ENCODE measurements at regions of chr1 and their contacts with region 1.

Region 1: DNA sequence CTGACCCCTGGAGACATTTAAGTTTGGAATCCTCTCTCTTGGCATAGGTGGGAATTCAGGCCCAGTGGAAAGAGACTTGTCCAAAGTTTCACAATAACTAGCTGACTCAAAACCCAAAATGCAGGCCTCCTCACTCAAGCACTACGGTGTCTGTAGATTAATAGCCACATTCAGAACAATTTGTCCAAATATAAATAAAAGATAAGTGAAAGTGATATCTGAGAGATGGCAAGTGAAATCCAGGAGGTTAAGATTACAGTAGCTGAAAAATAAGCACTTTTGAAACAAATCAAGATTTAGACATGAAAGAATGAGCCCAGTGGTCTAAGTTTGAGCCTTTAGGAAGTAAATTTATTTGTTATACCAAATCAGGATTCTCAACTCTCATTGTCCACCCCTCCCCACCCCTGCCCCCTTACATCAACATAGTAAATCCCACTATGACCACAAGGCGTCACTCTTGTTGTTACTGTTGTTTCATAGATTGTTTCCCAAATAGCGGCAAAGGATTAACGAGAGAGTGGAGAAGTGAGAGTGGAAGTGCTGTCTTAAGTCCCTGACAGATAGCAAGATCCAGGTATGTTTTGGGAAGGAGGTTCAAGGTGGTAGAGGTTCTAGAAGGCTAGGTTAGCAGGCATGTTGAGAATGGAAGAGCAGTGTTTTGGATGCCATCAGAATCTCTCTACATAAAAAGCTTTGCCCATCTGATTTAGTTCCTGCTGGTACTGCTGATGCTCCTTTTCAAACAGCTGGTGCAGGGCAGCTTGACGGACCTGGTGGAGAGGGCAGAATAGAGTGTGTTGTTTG is 7.1 kb upstream of the TPM3 start:
- DNase-seq: peak; percentile 36
- H3K4me3 Mint-ChIP-seq: no peak overlapping the region
- H3K27ac Mint-ChIP-seq: no peak overlapping the region
- H3K4me1 Mint-ChIP-seq: no peaks in the 10 kb centered on the region
- H3K27me3 Mint-ChIP-seq: peaks cover 14% of the 10 kb centered on the region

Region 2: GRCh38 chr1:154148807-154149206 is 50.2 kb before region 1 on chr1:
- CTCF ChIA-PET with region 1: no interaction called
- POLR2A ChIA-PET with region 1: no interaction called
- DNase-seq: no peak
- H3K4me3 Mint-ChIP-seq: no peak overlapping the region
- H3K27ac Mint-ChIP-seq: no peak overlapping the region
- H3K4me1 Mint-ChIP-seq: peaks cover 10% of the 10 kb centered on the region
- H3K27me3 Mint-ChIP-seq: no peaks in the 10 kb centered on the region

Region 3: GRCh38 chr1:154170547-154171222 is 28.3 kb before region 1 on chr1:
- CTCF ChIA-PET with region 1: no interaction called
- POLR2A ChIA-PET with region 1: no interaction called
- DNase-seq: peak; percentile 38
- H3K4me3 Mint-ChIP-seq: no peak overlapping the region
- H3K27ac Mint-ChIP-seq: peak overlapping the region; percentile 28
- H3K4me1 Mint-ChIP-seq: peaks cover 45% of the 10 kb centered on the region
- H3K27me3 Mint-ChIP-seq: no peaks in the 10 kb centered on the region

Region 4: GRCh38 chr1:154240294-154240831 is 41.4 kb after region 1 on chr1:
- CTCF ChIA-PET with region 1: no interaction called
- POLR2A ChIA-PET with region 1: no interaction called
- DNase-seq: no peak
- H3K4me3 Mint-ChIP-seq: no peak overlapping the region
- H3K27ac Mint-ChIP-seq: no peak overlapping the region
- H3K4me1 Mint-ChIP-seq: peaks cover 32% of the 10 kb centered on the region
- H3K27me3 Mint-ChIP-seq: no peaks in the 10 kb centered on the region

Region 5: DNA sequence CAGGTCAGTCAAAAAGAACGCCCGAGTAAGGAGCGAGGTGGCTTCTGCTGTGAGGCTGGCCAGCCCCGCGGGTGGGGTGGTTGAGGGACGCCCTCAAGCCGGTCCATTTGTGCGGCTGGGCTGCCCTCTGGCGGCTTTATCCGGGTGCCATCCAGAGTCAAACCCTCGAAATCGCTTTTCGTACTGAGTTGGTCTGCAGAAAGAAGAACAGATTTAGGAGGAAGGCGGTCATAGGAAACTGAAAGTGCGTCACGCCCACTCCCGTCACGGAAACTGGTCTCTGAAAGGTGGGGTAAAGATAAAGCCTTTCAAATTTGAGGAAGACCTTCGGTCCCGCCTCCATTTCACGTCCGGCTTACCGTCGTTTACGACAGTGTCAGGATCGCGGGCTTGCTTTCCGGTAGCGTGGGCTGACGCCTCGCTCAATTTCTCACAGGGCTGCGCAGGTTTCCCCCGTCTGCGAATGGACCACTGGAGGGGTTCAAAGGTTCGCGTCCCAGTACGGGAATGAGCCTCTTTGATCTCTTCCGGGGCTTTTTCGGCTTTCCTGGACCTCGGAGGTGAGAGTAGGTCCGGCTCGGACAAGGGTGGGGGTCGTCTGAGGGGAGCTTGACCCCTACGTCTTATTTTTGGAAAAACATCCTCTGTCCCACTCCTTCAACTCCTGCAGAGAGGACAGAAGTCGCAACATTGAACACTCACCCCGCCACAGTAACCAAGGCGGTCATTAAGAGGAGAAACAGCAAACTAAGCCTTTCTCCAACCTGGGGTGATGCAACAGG is 73.4 kb after region 1 on chr1 and contains the start of gene HAX1:
- CTCF ChIA-PET with region 1: interaction called, 15 read pairs
- POLR2A ChIA-PET with region 1: interaction called, 4 read pairs
- DNase-seq: peak; percentile 98
- H3K4me3 Mint-ChIP-seq: peak within 1 kb of the TSS; percentile 91
- H3K27ac Mint-ChIP-seq: peak within 1 kb of the TSS; percentile 94
- H3K4me1 Mint-ChIP-seq: peaks cover 43% of the 10 kb centered on the region
- H3K27me3 Mint-ChIP-seq: no peaks in the 10 kb centered on the region
- total RNA-seq, gene HAX1: 141 to 142 TPM

Region 6: DNA sequence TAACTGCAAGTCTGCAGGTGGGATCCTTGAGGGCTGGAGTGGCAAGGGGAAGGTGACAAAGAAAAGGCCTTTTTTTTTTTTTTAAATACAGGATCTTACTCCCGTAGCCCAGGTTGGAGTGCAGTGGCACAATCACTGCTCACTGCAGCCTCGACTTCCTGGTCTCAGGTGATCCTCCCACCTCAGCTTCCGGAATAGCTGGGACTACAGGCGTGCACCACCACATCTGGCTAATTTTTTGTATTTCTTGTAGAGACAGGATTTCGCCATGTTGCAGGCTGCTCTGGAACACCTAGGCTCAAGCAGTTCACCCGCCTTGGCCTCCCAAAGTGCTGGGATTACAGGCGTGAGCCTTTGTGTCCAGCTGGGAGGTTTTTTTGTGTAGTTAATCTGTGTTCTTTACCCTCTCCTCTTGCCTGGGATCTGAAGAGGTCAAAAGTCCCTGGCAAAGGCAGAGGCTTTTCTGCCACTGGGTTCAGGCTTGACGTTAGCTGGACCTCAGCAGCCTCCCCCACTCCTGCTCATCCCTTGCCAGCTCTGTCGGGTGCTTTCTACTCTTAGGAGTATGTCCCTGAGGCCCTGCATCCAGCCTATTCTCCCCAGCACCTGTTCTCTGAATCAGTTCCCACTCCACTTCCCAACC is 211.3 kb after region 1 on chr1:
- CTCF ChIA-PET with region 1: no interaction called
- POLR2A ChIA-PET with region 1: no interaction called
- DNase-seq: peak; percentile 28
- H3K4me3 Mint-ChIP-seq: peak overlapping the region; percentile 3
- H3K27ac Mint-ChIP-seq: peak overlapping the region; percentile 72
- H3K4me1 Mint-ChIP-seq: peaks cover 64% of the 10 kb centered on the region
- H3K27me3 Mint-ChIP-seq: peaks cover 13% of the 10 kb centered on the region